ENCODE measurements at regions of chr17 and their contacts with region 1.

Region 1: DNA sequence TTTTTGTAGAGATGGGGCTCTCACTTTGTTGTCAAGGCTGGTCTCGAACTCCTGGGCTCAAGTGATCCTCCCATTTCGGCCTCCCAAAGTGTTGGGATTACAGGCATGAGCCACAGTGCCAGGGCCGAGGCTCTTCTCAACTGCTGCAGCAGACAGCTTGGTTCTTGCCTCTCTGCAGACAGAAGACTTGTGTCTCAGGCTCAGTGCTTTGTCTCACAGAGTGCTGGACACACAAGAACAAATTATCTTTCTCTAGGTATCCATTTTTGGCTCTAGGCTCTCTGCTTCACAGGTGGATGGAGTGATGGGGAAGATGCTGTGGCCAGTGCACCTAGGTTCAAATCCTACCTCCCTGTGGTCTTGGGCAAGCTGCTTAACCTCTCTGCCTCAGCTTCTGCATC is 80.8 kb upstream of the RNU2-1 start:
- DNase-seq: no peak
- H3K4me3 ChIP-seq: no peak overlapping the region
- H3K27ac ChIP-seq: no peak overlapping the region
- H3K4me1 ChIP-seq: peaks cover 4% of the 10 kb centered on the region; the same call in 1 of the 2 replicates
- H3K27me3 ChIP-seq: no peaks in the 10 kb centered on the region
- CTCF ChIP-seq: no peak

Region 2: DNA sequence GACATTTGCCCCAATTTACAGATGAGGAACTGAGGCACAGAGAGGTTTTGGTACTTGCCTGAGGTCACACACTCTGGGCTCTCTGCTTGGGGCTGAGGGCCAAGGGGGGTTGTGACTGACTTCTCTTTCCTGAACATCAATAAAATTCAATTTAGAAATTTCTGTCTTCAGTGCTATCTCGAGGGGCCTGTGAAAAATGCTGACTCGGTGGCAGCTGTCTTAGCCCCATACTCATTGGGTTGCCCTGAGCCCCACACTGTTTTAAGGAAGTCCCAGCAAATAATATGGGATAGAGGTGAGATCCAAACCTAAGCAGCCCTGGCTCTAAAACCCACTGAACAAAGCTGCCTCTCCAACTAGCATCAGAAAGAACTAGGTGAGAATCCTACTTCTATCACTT is 182.5 kb before region 1 on chr17:
- CTCF ChIA-PET with region 1: no interaction called
- POLR2A ChIA-PET with region 1: interaction called, 11 read pairs
- intact Hi-C with region 1: no loop called
- DNase-seq: no peak
- H3K4me3 ChIP-seq: no peak overlapping the region
- H3K27ac ChIP-seq: no peak overlapping the region
- H3K4me1 ChIP-seq: no peaks in the 10 kb centered on the region
- H3K27me3 ChIP-seq: no peaks in the 10 kb centered on the region
- CTCF ChIP-seq: no peak

Region 3: DNA sequence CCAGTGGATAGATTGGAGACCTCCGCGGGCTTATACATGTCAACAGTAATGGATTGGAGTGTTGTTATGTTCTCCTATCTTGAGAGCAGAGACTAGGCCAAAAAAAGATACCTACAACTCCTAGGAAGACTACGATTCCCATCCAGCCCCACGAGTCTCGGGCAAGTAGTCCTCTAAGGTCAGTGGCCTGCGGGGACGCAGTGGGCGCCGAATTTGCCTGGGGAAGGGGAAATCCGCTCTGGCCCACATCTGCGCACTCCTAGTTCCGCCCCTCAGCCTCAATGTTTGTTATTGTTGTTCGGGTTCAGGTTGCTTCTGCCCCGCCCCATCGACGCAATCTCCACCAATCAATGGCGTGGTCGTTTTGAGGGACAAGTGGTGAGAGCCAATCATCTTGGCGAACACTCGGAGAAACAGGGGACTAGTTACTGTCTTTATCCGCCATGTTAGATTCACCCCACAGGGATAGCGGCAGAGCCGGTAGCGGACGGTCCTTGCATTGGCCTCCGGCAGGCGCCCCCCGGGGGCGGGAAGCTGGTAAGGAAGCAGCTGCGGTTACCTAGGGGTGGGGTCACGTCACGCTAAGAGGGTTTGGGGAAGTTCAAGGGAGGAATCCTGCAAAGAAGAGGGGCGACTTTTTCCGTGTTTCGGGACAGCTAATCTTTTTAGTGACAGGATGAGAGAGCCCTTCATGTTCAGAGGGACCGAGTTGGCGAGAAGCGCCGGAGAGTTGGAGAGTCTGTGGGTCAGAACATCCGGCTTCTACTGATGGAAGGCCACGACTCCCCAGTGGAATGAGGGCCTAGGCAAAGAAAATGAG is 143.6 kb before region 1 on chr17 and contains the start of gene NBR1:
- CTCF ChIA-PET with region 1: no interaction called
- POLR2A ChIA-PET with region 1: interaction called, 20 read pairs
- intact Hi-C with region 1: no loop called
- DNase-seq: peak; percentile 93
- H3K4me3 ChIP-seq: peak within 1 kb of the TSS; percentile 71
- H3K27ac ChIP-seq: peak within 1 kb of the TSS; percentile 95
- H3K4me1 ChIP-seq: peaks cover 14% of the 10 kb centered on the region
- H3K27me3 ChIP-seq: no peaks in the 10 kb centered on the region
- CTCF ChIP-seq: no peak
- total RNA-seq, gene NBR1: 80.5 and 93.7 TPM in 2 replicates

Region 4: DNA sequence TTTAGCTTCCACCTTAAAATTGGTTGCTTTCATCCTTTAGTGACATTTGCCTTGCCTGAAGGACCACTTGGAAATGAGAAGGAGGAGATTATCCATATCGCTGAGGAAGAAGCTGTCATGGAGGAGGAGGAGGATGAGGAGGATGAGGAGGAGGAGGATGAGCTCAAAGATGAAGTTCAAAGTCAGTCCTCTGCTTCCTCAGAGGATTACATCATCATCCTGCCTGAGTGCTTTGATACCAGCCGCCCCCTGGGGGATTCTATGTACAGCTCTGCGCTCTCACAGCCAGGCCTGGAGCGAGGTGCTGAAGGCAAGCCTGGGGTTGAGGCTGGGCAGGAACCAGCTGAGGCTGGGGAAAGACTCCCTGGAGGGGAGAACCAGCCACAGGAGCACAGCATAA is 114.5 kb before region 1 on chr17:
- CTCF ChIA-PET with region 1: interaction called, 16 read pairs
- POLR2A ChIA-PET with region 1: no interaction called
- intact Hi-C with region 1: no loop called
- DNase-seq: no peak
- H3K4me3 ChIP-seq: no peak overlapping the region
- H3K27ac ChIP-seq: no peak overlapping the region
- H3K4me1 ChIP-seq: peaks cover 9% of the 10 kb centered on the region
- H3K27me3 ChIP-seq: no peaks in the 10 kb centered on the region
- CTCF ChIP-seq: no peak

Region 5: DNA sequence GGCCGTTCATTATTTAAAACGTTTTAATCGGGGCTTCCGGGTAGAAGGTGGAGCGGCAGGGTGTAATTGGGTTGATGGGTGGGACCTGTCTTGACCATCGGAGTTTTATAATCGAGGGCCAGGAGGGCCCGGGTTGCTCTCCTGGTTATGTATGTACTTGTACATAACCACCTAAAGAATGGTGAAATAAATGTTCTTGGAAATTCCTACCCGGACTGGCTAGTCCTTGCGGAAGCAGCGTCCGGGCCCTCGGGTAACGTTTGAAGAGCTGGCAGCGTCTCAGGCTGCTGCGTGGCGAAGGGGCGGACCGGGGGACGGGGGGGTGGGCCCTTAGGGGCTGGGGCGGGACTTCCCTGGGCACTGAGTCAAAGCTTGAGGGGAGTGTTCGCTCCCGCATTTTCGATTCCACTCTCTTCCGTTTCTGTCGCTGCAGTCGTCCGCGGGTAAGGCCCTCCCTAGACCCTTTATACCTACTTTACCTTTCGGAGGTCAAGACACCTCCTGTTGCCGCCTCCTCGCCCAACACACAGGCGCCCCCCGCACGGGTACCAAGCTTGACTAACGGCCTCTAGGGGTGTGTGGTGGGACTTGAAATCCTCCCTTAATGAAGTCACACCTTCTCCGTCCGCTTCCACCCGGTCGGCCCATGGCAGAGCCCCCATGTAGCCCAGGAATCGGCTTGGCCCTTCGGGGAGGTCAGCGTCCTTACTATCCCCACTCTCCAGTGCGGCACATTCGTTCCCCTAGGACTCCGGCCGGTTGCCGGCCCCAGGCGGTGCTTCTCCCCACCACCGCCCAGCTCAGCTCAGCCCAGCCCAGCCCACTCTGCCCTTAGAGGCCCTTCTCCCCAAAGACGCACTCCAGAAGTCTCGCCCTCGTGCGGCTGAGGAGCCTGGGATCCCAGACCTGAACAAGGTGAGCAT is 102.9 kb before region 1 on chr17 and contains the start of gene TMEM106A:
- CTCF ChIA-PET with region 1: interaction called, 4 read pairs
- POLR2A ChIA-PET with region 1: interaction called, 14 read pairs
- intact Hi-C with region 1: no loop called
- DNase-seq: peak; percentile 71 to 83
- H3K4me3 ChIP-seq: peak within 1 kb of the TSS; percentile 70
- H3K27ac ChIP-seq: peak within 1 kb of the TSS; percentile 60
- H3K4me1 ChIP-seq: peaks cover 16% of the 10 kb centered on the region
- H3K27me3 ChIP-seq: no peaks in the 10 kb centered on the region
- CTCF ChIP-seq: peak; percentile 49
- total RNA-seq, gene TMEM106A: 8.3 and 8.6 TPM in 2 replicates

Region 6: DNA sequence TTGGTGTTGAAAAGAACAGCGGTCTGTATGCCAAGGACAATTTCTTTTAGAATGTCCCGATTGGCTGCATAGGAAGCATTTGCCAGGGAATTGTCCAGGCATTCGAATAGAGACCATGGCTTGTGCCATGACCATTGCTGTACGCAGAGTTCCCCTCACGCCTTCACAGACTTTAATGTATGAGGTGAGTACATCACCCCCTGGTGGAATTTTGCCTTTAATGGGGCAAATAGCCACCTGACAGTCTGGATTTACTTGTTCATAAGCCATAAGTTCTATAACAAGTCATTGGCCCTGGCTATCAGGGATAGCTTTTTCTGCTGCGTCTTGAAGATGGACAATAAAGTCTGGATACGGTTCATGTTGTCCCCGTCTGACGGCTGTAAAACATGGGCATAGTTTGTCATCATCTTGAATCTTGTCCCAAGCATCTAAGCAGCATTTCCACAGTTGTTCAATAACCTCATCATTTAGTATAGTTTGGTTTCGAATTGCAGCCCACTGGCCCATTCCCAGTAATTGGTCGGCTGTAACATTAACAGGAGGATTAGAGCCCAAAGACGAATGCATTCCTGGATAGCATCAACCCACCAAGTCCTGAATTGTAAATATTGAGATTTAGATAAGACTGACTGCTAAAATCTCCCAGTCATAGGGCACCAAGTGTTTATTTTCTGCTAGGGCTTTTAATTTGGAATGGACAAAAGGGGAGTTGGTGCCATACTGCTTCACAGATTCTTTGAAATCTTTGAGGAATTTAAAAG is 16.4 kb after region 1 on chr17:
- CTCF ChIA-PET with region 1: no interaction called
- POLR2A ChIA-PET with region 1: no interaction called
- intact Hi-C with region 1: no loop called
- DNase-seq: no peak
- H3K4me3 ChIP-seq: no peak overlapping the region
- H3K27ac ChIP-seq: no peak overlapping the region
- H3K4me1 ChIP-seq: peaks cover 27% of the 10 kb centered on the region
- H3K27me3 ChIP-seq: no peaks in the 10 kb centered on the region
- CTCF ChIP-seq: no peak

Region 7: DNA sequence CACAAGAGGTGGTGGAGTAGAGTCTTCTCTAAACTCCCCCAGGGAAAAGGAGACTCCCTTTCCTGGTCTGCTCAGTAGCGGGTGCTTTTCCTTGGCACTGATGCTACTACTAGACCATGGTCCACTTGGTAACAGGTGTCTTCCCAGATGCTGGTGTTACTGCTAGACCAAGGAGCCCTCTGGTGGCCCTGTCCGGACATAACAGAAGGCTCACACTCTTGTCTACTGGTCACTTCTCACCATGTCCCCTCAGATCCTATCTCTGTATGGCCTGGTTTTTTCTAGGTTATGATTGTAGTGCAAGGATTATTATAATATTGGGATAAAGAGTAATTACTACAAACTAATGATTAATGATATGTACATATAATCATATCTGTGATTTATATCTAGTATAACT is 34.5 kb after region 1 on chr17:
- CTCF ChIA-PET with region 1: no interaction called
- POLR2A ChIA-PET with region 1: no interaction called
- intact Hi-C with region 1: no loop called
- DNase-seq: no peak
- H3K4me3 ChIP-seq: no peak overlapping the region
- H3K27ac ChIP-seq: no peak overlapping the region
- H3K4me1 ChIP-seq: no peaks in the 10 kb centered on the region
- H3K27me3 ChIP-seq: no peaks in the 10 kb centered on the region
- CTCF ChIP-seq: 0 out of 2 replicates have a peak, but pooled peaks have one; percentile 21

Region 8: GRCh38 chr17:43360739-43361505 is 46.3 kb after region 1 on chr17:
- CTCF ChIA-PET with region 1: no interaction called
- POLR2A ChIA-PET with region 1: interaction called, 16 read pairs
- intact Hi-C with region 1: no loop called
- DNase-seq: peak; percentile 88 to 99
- H3K4me3 ChIP-seq: peak overlapping the region; percentile 64
- H3K27ac ChIP-seq: peak overlapping the region; percentile 92
- H3K4me1 ChIP-seq: peaks cover 44% of the 10 kb centered on the region
- H3K27me3 ChIP-seq: no peaks in the 10 kb centered on the region
- CTCF ChIP-seq: no peak